GM12878 (cell line): ENCODE measurements at regions of chr11 and their contacts with region 1.

Region 1: DNA sequence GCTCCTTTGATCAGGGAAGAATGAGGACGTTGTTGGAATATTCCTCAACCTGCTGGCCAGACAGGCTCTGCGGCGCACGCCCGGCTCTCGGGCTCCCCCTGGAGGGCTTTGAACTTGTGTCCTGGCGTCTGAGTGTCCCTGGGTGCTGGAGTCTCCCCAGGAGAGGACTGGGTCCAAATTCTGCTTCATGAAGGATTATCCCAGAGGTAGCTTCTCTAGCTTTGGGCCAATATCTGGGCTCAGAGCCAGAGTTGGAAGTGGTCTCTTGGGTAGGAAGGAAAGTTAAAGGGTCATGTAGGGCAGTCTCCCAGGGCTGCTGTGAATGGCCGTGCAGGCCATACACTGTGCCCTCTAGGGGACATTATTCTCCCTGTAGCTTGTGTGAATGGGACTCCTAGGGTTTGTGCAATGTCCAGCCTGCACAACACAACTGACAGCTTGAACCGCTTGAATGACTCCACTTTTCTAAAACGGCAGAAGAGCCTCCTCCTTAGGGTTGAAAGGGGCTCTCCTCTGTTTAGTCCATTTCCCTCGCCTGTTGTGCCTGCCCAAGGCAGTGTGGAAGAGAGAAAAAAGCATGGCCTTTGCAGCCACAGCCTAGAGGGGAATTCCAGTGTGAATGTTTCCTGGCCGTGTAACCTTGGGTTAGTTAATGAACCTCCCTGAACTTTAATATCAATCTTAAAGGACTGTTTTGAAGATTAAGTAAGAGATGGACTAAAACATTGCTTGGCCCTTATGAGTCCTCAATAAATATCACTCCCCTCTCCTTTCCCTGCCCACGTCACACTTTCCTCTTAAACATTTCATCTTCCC is 111.2 kb upstream of the THY1 start:
- DNase-seq: peak; percentile 13
- ATAC-seq: peak; percentile 97
- H3K4me3 ChIP-seq: no peak overlapping the region
- H3K27ac ChIP-seq: no peak overlapping the region
- H3K4me1 ChIP-seq: peaks cover 3% of the 10 kb centered on the region
- H3K27me3 ChIP-seq: no peaks in the 10 kb centered on the region
- CTCF ChIP-seq: peak; percentile 67 to 87 (median 84)
- EP300 ChIP-seq: no peak
- POLR2A ChIP-seq: no peak
- RAD21 ChIP-seq: peak; percentile 71

Region 2: DNA sequence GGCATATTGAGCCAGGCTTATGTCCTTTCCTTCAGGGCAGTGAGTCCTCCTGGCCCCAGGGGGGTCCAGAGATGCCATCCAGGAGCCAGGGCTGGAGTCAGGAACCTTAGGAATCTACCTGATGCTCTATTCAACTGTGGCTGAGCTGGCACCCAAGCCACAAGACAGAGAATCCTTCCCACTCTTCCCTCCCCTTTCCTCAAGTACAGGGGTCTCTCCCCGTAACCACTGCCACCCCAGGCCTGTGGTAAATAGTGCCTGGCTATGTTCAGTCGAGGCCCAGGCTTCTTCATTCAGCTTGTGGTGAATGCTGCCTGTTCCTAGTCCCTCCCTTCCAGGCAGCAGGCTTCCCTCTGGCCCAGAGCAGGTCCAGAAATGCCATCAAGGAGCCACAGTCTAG is 65.6 kb before region 1 on chr11:
- CTCF ChIA-PET with region 1: no interaction called
- POLR2A ChIA-PET with region 1: no interaction called
- RAD21 ChIA-PET with region 1: no interaction called
- SMC1A ChIA-PET with region 1: no interaction called
- in situ Hi-C with region 1: no loop called
- intact Hi-C with region 1: no loop called
- DNase-seq: no peak
- ATAC-seq: no peak
- H3K4me3 ChIP-seq: no peak overlapping the region
- H3K27ac ChIP-seq: no peak overlapping the region
- H3K4me1 ChIP-seq: no peaks in the 10 kb centered on the region
- H3K27me3 ChIP-seq: peaks cover 0 to 1% of the 10 kb centered on the region in 2 experiments; a peak in 1 of 4 replicates
- CTCF ChIP-seq: no peak
- EP300 ChIP-seq: no peak
- POLR2A ChIP-seq: no peak
- RAD21 ChIP-seq: no peak

Region 3: GRCh38 chr11:119481021-119481666 is 53.0 kb before region 1 on chr11:
- CTCF ChIA-PET with region 1: interaction called, 15 read pairs
- POLR2A ChIA-PET with region 1: no interaction called
- RAD21 ChIA-PET with region 1: interaction called, 13 read pairs
- SMC1A ChIA-PET with region 1: interaction called, 5 read pairs
- in situ Hi-C with region 1: loop called (anchors 5 kb)
- intact Hi-C with region 1: loop called (anchors 1 kb)
- DNase-seq: peak; percentile 31
- ATAC-seq: peak; percentile 89
- H3K4me3 ChIP-seq: no peak overlapping the region
- H3K27ac ChIP-seq: no peak overlapping the region
- H3K4me1 ChIP-seq: no peaks in the 10 kb centered on the region
- H3K27me3 ChIP-seq: no peaks in the 10 kb centered on the region; a peak in 1 of 4 replicates
- CTCF ChIP-seq: peak; percentile 91 to 99 (median 97)
- EP300 ChIP-seq: no peak
- POLR2A ChIP-seq: no peak
- RAD21 ChIP-seq: peak; percentile 93

Region 4: DNA sequence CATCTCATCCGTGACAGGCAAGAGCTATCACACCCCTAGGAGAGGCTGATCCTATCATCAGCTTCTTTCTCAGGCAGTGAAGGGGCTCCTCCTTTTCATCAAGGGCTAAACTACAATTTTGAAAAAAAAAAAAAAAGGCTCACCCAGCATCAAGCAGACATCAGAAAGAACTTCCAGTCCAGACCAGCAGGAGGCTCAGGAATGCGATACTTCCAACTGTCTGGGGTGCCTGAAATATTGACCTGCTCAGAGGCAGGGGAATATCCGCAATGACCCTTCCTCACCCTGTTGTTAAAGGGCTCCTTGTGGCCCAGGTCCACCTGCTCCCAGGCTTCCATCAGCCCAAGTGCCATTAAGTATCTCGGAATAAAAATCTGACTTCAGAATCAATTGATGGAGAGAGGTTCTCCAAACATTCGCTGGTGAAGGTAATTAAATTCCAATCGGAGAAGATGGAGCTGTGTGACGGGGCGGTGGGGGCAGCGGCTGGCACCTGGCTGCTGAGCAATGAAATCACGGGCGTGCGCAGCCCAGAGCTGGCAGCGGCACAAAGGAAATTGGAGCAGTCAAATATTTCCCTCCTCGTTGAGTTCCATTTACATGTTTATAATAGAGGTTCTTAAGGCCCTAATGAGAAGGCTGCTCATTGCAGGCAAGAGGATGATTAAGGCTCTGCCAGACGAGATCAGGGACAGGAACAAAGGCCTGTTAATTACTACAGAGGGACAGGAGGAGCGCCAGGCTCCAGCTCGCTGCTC is 42.2 kb before region 1 on chr11:
- CTCF ChIA-PET with region 1: interaction called, 20 read pairs
- POLR2A ChIA-PET with region 1: no interaction called
- RAD21 ChIA-PET with region 1: interaction called, 6 read pairs
- SMC1A ChIA-PET with region 1: interaction called, 3 read pairs
- in situ Hi-C with region 1: no loop called
- intact Hi-C with region 1: no loop called
- DNase-seq: no peak
- ATAC-seq: no peak
- H3K4me3 ChIP-seq: no peak overlapping the region
- H3K27ac ChIP-seq: no peak overlapping the region
- H3K4me1 ChIP-seq: no peaks in the 10 kb centered on the region
- H3K27me3 ChIP-seq: peaks cover 0 to 2% of the 10 kb centered on the region in 2 experiments; a peak in 2 of 4 replicates
- CTCF ChIP-seq: peak; percentile 9 to 12 (median 9); a peak in 3 of 6 replicates
- EP300 ChIP-seq: no peak
- POLR2A ChIP-seq: no peak
- RAD21 ChIP-seq: no peak

Region 5: GRCh38 chr11:119509969-119510401 is 24.1 kb before region 1 on chr11:
- CTCF ChIA-PET with region 1: interaction called, 41 read pairs
- POLR2A ChIA-PET with region 1: no interaction called
- RAD21 ChIA-PET with region 1: interaction called, 7 read pairs
- SMC1A ChIA-PET with region 1: interaction called, 12 read pairs
- in situ Hi-C with region 1: no loop called
- intact Hi-C with region 1: no loop called
- DNase-seq: peak; percentile 76
- ATAC-seq: peak; percentile 86
- H3K4me3 ChIP-seq: no peak overlapping the region
- H3K27ac ChIP-seq: no peak overlapping the region
- H3K4me1 ChIP-seq: peaks cover 20% of the 10 kb centered on the region
- H3K27me3 ChIP-seq: no peaks in the 10 kb centered on the region; a peak in 1 of 4 replicates
- CTCF ChIP-seq: no peak
- EP300 ChIP-seq: no peak; a peak in 1 of 4 replicates
- POLR2A ChIP-seq: no peak
- RAD21 ChIP-seq: no peak

Region 6: GRCh38 chr11:119567688-119568582 is 33.8 kb after region 1 on chr11:
- CTCF ChIA-PET with region 1: interaction called, 10 read pairs
- POLR2A ChIA-PET with region 1: no interaction called
- RAD21 ChIA-PET with region 1: interaction called, 7 read pairs
- SMC1A ChIA-PET with region 1: no interaction called
- in situ Hi-C with region 1: no loop called
- intact Hi-C with region 1: no loop called
- DNase-seq: peak; percentile 56
- ATAC-seq: peak; percentile 90
- H3K4me3 ChIP-seq: no peak overlapping the region
- H3K27ac ChIP-seq: no peak overlapping the region
- H3K4me1 ChIP-seq: peaks cover 6% of the 10 kb centered on the region
- H3K27me3 ChIP-seq: no peaks in the 10 kb centered on the region
- CTCF ChIP-seq: no peak
- EP300 ChIP-seq: 0 out of 4 replicates have a peak, but pooled peaks of 1 of the 2 experiments have one; percentile 4
- POLR2A ChIP-seq: no peak
- RAD21 ChIP-seq: no peak

Region 7: GRCh38 chr11:120137611-120138521 is 603.7 kb after region 1 on chr11 and contains the start of gene TRIM29:
- CTCF ChIA-PET with region 1: no interaction called
- POLR2A ChIA-PET with region 1: no interaction called
- RAD21 ChIA-PET with region 1: no interaction called
- SMC1A ChIA-PET with region 1: no interaction called
- in situ Hi-C with region 1: no loop called
- intact Hi-C with region 1: no loop called
- DNase-seq: no peak
- ATAC-seq: no peak
- H3K4me3 ChIP-seq: no peak within 1 kb of the TSS
- H3K27ac ChIP-seq: no peak within 1 kb of the TSS
- H3K4me1 ChIP-seq: no peaks in the 10 kb centered on the region
- H3K27me3 ChIP-seq: peaks cover 6 to 13% of the 10 kb centered on the region in 2 experiments; a peak in 3 of 4 replicates
- CTCF ChIP-seq: no peak
- EP300 ChIP-seq: no peak
- POLR2A ChIP-seq: no peak
- RAD21 ChIP-seq: no peak
- polyA plus RNA-seq, gene TRIM29: not detected